MCF 10A (cell line): ENCODE measurements at regions of chr17 and their contacts with region 1.

Region 1: GRCh38 chr17:20992987-20993862 is 49.6 kb downstream of the USP22 start:
- DNase-seq: peak; percentile 73
- H3K4me3 Mint-ChIP-seq: peak overlapping the region; percentile 50
- H3K27ac Mint-ChIP-seq: no peak overlapping the region
- H3K4me1 Mint-ChIP-seq: peaks cover 4% of the 10 kb centered on the region
- H3K27me3 Mint-ChIP-seq: no peaks in the 10 kb centered on the region
- CTCF ChIP-seq: peak; percentile 86

Region 2: DNA sequence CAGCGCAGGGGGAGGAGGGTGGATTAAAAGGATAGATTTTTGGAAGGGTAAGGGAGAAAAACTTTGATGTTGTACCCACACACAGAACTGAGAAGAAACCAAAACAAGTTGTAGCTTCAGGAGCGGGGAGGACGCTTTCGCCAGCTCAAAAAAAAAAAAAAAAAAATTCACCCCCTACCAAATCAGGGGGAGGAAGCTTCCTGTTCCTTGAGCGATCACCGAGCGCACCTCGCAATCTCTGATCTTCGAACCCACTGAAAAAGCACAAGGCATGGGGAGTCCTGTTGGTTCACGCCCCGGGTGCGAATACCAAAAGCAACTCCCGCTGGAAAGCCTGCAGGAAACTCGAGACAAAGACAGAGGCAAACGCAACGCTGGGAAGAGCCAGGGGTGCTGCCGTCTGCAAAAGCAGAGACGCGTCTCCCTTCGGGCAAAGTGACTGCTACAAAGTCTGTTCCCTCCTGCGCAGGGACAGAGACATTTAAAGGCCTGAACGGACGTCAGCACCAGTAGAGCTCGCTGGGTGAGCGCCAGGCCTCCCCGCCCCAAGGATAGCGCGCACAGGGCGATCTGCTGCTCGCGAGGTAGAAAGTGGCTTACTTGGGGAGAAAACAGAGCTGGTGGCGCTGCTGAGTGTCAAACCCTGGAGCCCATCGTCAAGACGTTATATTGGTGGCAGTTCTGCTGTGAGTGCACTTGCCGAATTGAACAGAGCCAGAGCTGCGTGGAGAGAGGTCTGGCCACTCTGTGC is 140.8 kb before region 1 on chr17:
- CTCF ChIA-PET with region 1: interaction called, 7 read pairs
- POLR2A ChIA-PET with region 1: no interaction called
- intact Hi-C with region 1: loop called (anchors 5 kb)
- DNase-seq: peak; percentile 12
- H3K4me3 Mint-ChIP-seq: peak overlapping the region; percentile 58
- H3K27ac Mint-ChIP-seq: no peak overlapping the region
- H3K4me1 Mint-ChIP-seq: no peaks in the 10 kb centered on the region
- H3K27me3 Mint-ChIP-seq: peaks cover 11% of the 10 kb centered on the region
- CTCF ChIP-seq: no peak

Region 3: GRCh38 chr17:20935740-20936139 is 57.5 kb before region 1 on chr17:
- CTCF ChIA-PET with region 1: interaction called, 12 read pairs
- POLR2A ChIA-PET with region 1: interaction called, 6 read pairs
- intact Hi-C with region 1: no loop called
- DNase-seq: peak; percentile 89
- H3K4me3 Mint-ChIP-seq: peak overlapping the region; percentile 51
- H3K27ac Mint-ChIP-seq: peak overlapping the region; percentile 87
- H3K4me1 Mint-ChIP-seq: peaks cover 20% of the 10 kb centered on the region
- H3K27me3 Mint-ChIP-seq: no peaks in the 10 kb centered on the region
- CTCF ChIP-seq: no peak

Region 4: DNA sequence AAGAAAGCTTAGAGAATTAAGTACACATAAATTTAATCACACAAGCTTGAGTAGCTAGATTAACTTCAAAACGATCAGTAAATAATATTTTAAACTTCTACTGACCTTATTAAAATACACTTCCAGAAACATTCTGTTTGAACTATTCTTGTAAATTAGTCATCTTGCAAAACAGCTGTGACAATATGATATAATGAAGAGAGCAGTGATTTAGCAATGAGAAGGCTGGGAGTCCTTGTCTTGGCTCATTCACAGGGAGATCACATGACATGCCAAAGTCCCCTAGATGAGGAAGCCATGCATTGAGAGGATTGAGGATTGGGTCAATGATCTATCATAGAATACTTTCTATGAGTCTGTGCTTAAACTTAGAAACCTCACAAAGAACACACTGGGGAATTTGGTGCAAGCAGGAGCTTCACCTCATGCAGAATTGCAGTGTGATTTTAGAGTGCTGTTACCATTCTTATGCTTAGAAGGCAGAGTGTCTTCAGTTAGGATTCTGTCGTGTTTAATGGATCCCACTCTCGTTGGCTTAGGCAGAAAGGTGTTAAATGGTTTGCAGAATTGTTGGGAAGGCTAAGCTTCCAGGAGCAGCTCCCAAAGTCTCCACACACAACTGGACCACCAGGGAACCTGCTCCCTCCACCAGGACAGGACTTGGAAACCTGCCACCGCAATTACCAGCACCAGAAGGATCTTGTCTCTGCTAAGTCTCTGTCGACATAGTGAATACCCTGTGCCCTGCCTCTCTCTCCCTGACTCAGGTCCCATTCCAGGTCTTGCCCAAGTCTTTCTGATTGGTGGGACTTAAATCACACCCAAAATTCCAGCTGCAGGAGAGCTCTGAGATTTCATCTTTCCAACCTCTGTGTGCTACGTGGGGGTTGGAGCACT is 37.5 kb before region 1 on chr17:
- CTCF ChIA-PET with region 1: interaction called, 10 read pairs
- POLR2A ChIA-PET with region 1: interaction called, 4 read pairs
- intact Hi-C with region 1: no loop called
- DNase-seq: peak; percentile 77
- H3K4me3 Mint-ChIP-seq: no peak overlapping the region
- H3K27ac Mint-ChIP-seq: no peak overlapping the region
- H3K4me1 Mint-ChIP-seq: peaks cover 20% of the 10 kb centered on the region
- H3K27me3 Mint-ChIP-seq: no peaks in the 10 kb centered on the region
- CTCF ChIP-seq: no peak

Region 5: GRCh38 chr17:21313320-21313719 is 320.1 kb after region 1 on chr17:
- CTCF ChIA-PET with region 1: no interaction called
- POLR2A ChIA-PET with region 1: no interaction called
- intact Hi-C with region 1: no loop called
- DNase-seq: no peak
- H3K4me3 Mint-ChIP-seq: no peak overlapping the region
- H3K27ac Mint-ChIP-seq: no peak overlapping the region
- H3K4me1 Mint-ChIP-seq: no peaks in the 10 kb centered on the region
- H3K27me3 Mint-ChIP-seq: no peaks in the 10 kb centered on the region
- CTCF ChIP-seq: no peak